Endothelial cell of umbilical vein (primary cell): ENCODE measurements at regions of chr6 and their contacts with region 1.

Region 1: DNA sequence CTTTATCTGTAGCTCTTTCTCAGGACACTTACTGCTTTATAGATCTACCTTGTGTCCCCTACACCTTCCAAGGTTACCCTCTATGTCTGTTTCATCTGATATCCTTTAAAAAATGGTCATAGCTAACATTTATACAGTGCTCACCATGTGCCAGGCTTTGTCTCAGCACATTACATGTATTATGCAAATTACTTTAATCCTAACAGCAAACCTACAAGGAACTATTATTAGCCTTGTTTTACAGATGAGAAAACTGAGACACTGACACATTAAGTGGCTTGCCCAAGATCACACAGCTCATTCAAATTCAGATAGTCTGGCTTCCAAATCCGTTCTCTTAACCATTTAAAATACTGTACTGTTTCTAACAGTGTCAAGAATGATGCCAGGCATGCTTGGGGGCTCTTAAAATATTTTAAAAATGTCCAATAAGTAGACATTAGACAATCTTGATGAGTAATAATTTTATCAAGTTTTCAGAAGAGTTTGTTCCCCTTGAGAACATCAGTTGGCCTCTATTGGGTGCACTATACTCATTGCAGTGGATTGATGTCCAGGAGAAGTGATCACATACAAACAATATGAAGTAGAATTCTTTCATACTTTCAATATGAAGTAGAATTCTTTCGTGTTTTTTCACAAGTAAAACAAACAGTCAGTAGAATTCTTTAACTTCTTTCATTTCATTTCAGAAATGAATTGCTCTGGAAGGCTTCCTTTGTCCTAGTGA is 69.6 kb downstream of the DNAH8 start:
- DNase-seq: peak; percentile 16
- H3K4me3 ChIP-seq: no peak overlapping the region
- H3K27ac ChIP-seq: no peak overlapping the region
- H3K4me1 ChIP-seq: peaks cover 44% of the 10 kb centered on the region
- H3K27me3 ChIP-seq: no peaks in the 10 kb centered on the region
- CTCF ChIP-seq: no peak
- POLR2A ChIP-seq: no peak

Region 2: GRCh38 chr6:38773338-38773737 is 11.3 kb before region 1 on chr6:
- CTCF ChIA-PET with region 1: interaction called, 55 read pairs
- POLR2A ChIA-PET with region 1: no interaction called
- dilution Hi-C with region 1: no loop called
- intact Hi-C with region 1: loop called (anchors 1 kb)
- DNase-seq: peak; percentile 18
- H3K4me3 ChIP-seq: no peak overlapping the region
- H3K27ac ChIP-seq: no peak overlapping the region
- H3K4me1 ChIP-seq: peaks cover 22% of the 10 kb centered on the region
- H3K27me3 ChIP-seq: no peaks in the 10 kb centered on the region
- CTCF ChIP-seq: peak; percentile 50 to 58
- POLR2A ChIP-seq: no peak

Region 3: GRCh38 chr6:39169439-39170344 is 385.0 kb after region 1 on chr6:
- CTCF ChIA-PET with region 1: no interaction called
- POLR2A ChIA-PET with region 1: no interaction called
- dilution Hi-C with region 1: no loop called
- intact Hi-C with region 1: no loop called
- DNase-seq: no peak
- H3K4me3 ChIP-seq: no peak overlapping the region
- H3K27ac ChIP-seq: no peak overlapping the region
- H3K4me1 ChIP-seq: no peaks in the 10 kb centered on the region
- H3K27me3 ChIP-seq: no peaks in the 10 kb centered on the region
- CTCF ChIP-seq: no peak
- POLR2A ChIP-seq: no peak